Naive thymus-derived CD4-positive, alpha-beta T cell (primary cell): ENCODE measurements at regions of chr10 and their contacts with region 1.

Region 1: DNA sequence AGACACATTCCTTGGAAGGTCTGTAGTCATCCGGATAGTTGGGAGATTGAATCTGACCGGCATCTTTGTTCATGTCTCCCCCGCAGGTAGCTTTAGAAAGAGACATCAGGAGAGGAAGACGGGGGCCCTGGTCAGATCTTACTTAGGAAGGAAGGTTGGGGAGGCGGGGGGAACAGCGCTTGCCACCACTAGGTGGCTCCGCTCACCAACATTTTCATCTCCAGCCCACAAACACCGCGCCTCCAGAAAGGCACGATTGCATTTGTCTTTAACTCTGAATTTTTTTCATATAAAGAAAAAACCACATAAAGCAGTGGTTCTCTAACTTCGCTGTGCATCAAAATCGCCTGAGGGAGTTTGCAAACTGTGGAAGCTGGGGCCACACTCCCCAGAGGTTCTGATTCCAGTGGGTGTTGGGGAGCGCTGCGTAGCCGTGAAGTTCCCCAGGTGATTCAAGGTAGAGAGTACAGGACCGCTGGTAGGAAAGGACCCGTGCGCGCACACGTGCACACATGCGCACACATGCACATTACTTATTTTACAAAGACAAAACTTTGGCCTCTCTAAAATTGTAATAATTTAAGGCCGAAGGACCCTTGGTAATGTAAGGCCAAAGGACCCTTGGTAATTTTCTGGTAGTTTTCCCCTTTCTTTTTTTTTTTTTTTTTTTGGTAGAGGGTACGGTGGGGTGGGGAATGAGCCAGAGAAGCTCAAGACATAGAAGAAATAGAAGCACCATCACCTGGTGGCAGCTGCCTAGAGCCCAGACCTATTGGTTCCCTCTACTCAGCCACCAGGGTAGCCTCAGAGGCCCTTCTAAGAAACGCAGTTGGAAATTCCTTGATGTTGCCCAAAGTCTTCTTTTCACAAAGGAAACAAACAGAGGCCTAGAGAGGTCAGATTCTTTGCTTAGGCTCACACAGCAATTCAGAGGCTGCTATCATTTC is 37.4 kb upstream of the OPALIN start:
- DNase-seq: peak; percentile 35 to 67 (median 56)
- ATAC-seq: peak; percentile 89
- H3K4me3 ChIP-seq: peak overlapping the region; percentile 28
- H3K4me3 Mint-ChIP-seq: peak overlapping the region in 7 of 10 donors; percentile 6 to 80 (median 66)
- H3K27ac ChIP-seq: no peak overlapping the region
- H3K27ac Mint-ChIP-seq: no peak overlapping the region
- H3K4me1 ChIP-seq: no peaks in the 10 kb centered on the region
- H3K4me1 Mint-ChIP-seq: peaks cover 0 to 5% (median 0%) of the 10 kb centered on the region in 7 donors
- H3K27me3 ChIP-seq: no peaks in the 10 kb centered on the region
- H3K27me3 Mint-ChIP-seq: peaks cover 7 to 52% (median 16%) of the 10 kb centered on the region in 5 donors

Region 2: DNA sequence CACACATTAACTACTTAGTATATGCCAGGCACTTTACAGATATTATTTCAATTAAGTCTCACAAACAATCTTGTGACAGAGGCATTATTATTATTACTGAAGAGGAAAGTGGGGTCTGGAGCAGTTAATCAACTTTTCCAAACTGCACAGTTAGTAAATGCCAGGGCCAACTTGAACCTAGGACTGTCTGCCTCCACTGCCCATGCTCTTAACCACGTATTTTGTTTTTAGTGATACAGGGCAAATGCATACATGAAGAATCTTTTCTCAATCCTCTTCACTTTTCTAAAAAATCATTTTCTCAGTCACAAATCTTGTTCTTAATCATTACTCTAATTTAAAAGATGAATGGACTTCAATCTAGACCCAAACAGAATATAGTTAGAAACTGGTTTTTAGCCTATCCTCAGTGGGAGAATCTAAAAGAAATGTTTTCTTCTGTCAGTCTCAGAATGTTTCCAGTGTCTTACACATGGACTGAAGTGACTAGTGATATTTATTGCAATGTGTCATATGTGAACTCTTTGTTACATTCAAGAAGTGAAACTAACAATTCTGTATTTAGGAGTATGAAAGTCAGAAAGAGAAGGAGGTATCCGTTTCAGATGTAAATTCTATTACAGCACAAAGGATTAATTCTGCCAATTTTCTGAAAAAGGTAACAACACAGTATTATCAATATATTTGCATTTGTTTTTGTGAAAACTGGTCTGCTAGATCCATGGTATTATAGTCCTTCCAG is 408.3 kb before region 1 on chr10:
- CTCF ChIA-PET with region 1: no interaction called
- POLR2A ChIA-PET with region 1: no interaction called
- intact Hi-C with region 1: no loop called
- DNase-seq: no peak
- ATAC-seq: no peak
- H3K4me3 ChIP-seq: no peak overlapping the region
- H3K4me3 Mint-ChIP-seq: no peak overlapping the region
- H3K27ac ChIP-seq: no peak overlapping the region
- H3K27ac Mint-ChIP-seq: no peak overlapping the region
- H3K4me1 ChIP-seq: no peaks in the 10 kb centered on the region
- H3K4me1 Mint-ChIP-seq: no peaks in the 10 kb centered on the region
- H3K27me3 ChIP-seq: no peaks in the 10 kb centered on the region
- H3K27me3 Mint-ChIP-seq: peaks cover 0 to 34% (median 5%) of the 10 kb centered on the region in 5 donors

Region 3: DNA sequence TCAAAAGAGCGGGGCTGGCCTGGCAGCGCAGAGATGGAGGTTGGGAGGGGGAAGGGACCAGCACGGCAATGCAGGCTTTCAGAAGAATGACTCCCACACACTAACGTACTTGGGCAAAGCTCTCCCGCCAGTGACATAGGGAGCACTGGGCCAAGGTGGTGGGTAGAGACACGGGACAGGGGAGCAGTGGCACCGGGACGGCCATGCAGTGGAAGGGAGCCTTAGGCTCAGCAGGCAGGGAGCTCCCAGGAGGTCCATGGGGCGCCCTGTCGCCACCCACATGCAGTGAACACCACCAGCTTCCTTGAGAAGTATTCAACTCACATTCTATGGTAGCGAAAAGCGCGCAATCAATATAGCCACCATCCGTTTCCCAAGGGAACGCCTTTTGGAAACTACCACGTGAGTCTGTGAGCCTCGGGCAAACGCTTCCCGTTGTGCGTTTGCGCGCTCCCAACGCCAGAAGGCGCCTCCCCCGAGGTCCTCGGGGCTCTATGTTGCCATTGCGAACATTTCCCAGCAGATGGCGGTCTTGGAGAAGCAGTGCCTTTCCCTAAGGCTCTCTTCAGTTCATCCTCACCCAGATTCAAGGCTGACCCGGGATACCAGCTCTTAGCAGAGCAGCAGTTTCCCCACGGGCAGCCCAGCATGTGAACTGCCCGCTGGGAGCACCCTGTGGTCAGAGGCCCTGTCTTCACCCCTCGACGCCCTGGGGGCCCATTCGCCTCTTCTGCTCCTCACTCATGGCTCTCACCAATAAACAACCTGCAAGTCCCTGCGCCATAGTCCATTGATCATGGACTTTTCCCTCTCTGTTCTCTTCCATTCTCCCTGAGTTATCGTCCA is 21.0 kb before region 1 on chr10:
- CTCF ChIA-PET with region 1: interaction called, 3 read pairs
- POLR2A ChIA-PET with region 1: no interaction called
- intact Hi-C with region 1: loop called in 1 of 2 experiments (anchors 2 kb)
- DNase-seq: peak; percentile 23 to 75 (median 58)
- ATAC-seq: peak; percentile 92
- H3K4me3 ChIP-seq: peak overlapping the region; percentile 68
- H3K4me3 Mint-ChIP-seq: peak overlapping the region; percentile 60 to 90 (median 83)
- H3K27ac ChIP-seq: no peak overlapping the region
- H3K27ac Mint-ChIP-seq: peak overlapping the region in 1 of 9 donors; percentile 6
- H3K4me1 ChIP-seq: no peaks in the 10 kb centered on the region
- H3K4me1 Mint-ChIP-seq: peaks cover 0 to 14% (median 6%) of the 10 kb centered on the region in 7 donors
- H3K27me3 ChIP-seq: no peaks in the 10 kb centered on the region
- H3K27me3 Mint-ChIP-seq: peaks cover 0 to 13% (median 9%) of the 10 kb centered on the region in 5 donors

Region 4: GRCh38 chr10:96556003-96556402 is 159.8 kb after region 1 on chr10:
- CTCF ChIA-PET with region 1: no interaction called
- POLR2A ChIA-PET with region 1: no interaction called
- intact Hi-C with region 1: loop called in 1 of 2 experiments (anchors 2 kb)
- DNase-seq: peak in 1 of 9 donors; percentile 6
- ATAC-seq: peak; percentile 52
- H3K4me3 ChIP-seq: no peak overlapping the region
- H3K4me3 Mint-ChIP-seq: no peak overlapping the region
- H3K27ac ChIP-seq: no peak overlapping the region
- H3K27ac Mint-ChIP-seq: no peak overlapping the region
- H3K4me1 ChIP-seq: no peaks in the 10 kb centered on the region
- H3K4me1 Mint-ChIP-seq: peaks cover 0 to 5% (median 0%) of the 10 kb centered on the region in 7 donors
- H3K27me3 ChIP-seq: no peaks in the 10 kb centered on the region
- H3K27me3 Mint-ChIP-seq: no peaks in the 10 kb centered on the region

Region 5: DNA sequence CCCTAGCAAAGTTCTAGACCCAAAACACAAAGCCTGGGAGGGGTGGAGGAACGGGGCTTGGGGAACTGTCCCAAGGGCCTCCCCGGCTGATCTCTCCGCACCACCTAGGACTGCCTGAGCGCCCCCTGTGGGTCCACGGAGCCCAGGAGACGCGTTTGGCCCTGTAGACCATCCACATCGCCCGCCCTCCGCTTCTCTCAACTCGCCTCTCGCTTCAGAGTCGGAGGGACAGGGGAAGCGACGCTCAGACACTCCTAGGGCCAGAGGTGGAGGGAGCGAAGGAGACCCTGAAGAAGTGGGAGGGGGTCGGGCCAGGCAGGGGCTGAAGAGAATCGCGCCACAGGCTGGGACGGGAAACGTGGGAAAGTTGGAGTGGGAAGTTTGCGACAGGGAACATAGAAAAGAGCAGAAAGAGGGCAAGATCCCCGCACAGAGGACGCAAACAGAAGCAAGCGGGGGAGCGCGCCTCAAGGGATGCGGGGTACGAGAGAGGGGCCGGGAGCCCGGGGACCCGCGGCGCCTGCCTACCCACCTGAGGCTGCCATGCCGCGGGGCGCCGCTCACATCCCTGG is 323.7 kb after region 1 on chr10:
- CTCF ChIA-PET with region 1: no interaction called
- POLR2A ChIA-PET with region 1: no interaction called
- intact Hi-C with region 1: loop called in 1 of 2 experiments (anchors 10 kb)
- DNase-seq: peak in 5 of 9 donors; percentile 2 to 52 (median 15)
- ATAC-seq: peak; percentile 77
- H3K4me3 ChIP-seq: peak overlapping the region; percentile 58
- H3K4me3 Mint-ChIP-seq: peak overlapping the region; percentile 84 to 98 (median 92)
- H3K27ac ChIP-seq: no peak overlapping the region
- H3K27ac Mint-ChIP-seq: peak overlapping the region in 7 of 9 donors; percentile 20 to 77 (median 69)
- H3K4me1 ChIP-seq: peaks cover 6 to 20% of the 10 kb centered on the region in 2 donors
- H3K4me1 Mint-ChIP-seq: peaks cover 17 to 35% (median 26%) of the 10 kb centered on the region in 7 donors
- H3K27me3 ChIP-seq: no peaks in the 10 kb centered on the region
- H3K27me3 Mint-ChIP-seq: peaks cover 0 to 24% (median 4%) of the 10 kb centered on the region in 5 donors

Region 6: DNA sequence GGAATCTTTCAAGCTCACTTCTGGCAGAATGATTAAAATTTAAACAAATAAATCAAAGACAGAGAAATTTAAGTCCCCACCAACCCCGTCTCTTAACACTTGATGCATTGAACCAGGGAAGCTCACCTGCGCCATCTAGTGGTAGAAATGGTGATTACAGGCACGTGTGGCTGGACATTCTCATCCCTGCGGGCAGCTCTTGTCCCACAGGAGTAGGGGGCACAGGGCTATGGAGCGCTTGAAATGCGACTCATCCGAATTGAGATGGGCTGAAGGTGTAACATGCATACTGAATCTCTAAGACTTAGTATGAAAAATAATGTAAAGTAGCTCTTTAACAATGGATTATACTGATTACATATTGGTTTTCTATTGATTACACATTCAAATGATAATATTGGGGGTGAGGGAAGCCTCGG is 814.3 kb after region 1 on chr10:
- CTCF ChIA-PET with region 1: interaction called, 6 read pairs
- POLR2A ChIA-PET with region 1: no interaction called
- intact Hi-C with region 1: loop called in 1 of 2 experiments (anchors 1 kb)
- DNase-seq: peak; percentile 38 to 74 (median 54)
- ATAC-seq: peak; percentile 67
- H3K4me3 ChIP-seq: no peak overlapping the region
- H3K4me3 Mint-ChIP-seq: no peak overlapping the region
- H3K27ac ChIP-seq: no peak overlapping the region
- H3K27ac Mint-ChIP-seq: no peak overlapping the region
- H3K4me1 ChIP-seq: no peaks in the 10 kb centered on the region
- H3K4me1 Mint-ChIP-seq: no peaks in the 10 kb centered on the region
- H3K27me3 ChIP-seq: no peaks in the 10 kb centered on the region
- H3K27me3 Mint-ChIP-seq: peaks cover 0 to 2% (median 0%) of the 10 kb centered on the region in 5 donors